AG04449 (cell line): ENCODE measurements at regions of chr5 and their contacts with region 1.

Region 1: GRCh38 chr5:95781101-95781583 is 41.4 kb downstream of the GLRX start:
- DNase-seq: no peak
- H3K4me3 ChIP-seq: no peak overlapping the region
- CTCF ChIP-seq: peak; percentile 86

Region 2: GRCh38 chr5:95406426-95407090 is 374.6 kb before region 1 on chr5:
- CTCF ChIA-PET with region 1: no interaction called
- POLR2A ChIA-PET with region 1: no interaction called
- DNase-seq: no peak
- H3K4me3 ChIP-seq: no peak overlapping the region
- CTCF ChIP-seq: no peak

Region 3: DNA sequence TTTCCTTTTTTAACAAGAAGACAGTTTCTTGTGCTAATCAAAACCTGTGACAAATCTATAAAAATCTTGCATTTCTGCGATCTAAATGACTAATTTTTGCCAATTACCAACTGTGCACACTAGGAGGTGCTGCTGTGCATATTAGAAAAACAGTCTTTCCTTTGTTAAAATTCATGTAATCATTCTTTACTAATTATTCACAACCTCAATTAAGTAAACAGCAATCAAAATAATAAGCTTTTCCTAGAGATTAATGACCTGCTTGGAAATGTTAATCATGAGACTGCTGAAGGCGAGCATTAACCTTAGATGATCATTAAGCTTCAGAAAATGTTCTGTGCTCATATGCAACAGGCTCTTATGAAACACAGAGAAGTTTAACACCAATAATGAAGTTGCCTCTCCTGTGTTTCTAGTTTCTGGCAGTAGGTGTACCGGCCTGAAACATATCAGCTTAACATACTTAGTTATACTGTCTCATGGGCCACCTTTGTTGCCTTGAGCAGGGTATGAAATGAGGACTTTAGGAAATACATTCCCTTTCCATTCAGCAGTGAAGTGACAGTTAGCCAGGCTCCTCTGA is 116.8 kb before region 1 on chr5:
- CTCF ChIA-PET with region 1: interaction called, 41 read pairs
- POLR2A ChIA-PET with region 1: no interaction called
- DNase-seq: no peak
- H3K4me3 ChIP-seq: no peak overlapping the region
- CTCF ChIP-seq: peak; percentile 59

Region 4: GRCh38 chr5:95760273-95761191 is 20.6 kb before region 1 on chr5:
- CTCF ChIA-PET with region 1: interaction called, 11 read pairs
- POLR2A ChIA-PET with region 1: interaction called, 3 read pairs
- DNase-seq: peak; percentile 99
- H3K4me3 ChIP-seq: peak overlapping the region; percentile 30
- CTCF ChIP-seq: no peak

Region 5: GRCh38 chr5:95808686-95809413 is 27.7 kb after region 1 on chr5:
- CTCF ChIA-PET with region 1: interaction called, 25 read pairs
- POLR2A ChIA-PET with region 1: no interaction called
- DNase-seq: peak; percentile 46
- H3K4me3 ChIP-seq: no peak overlapping the region
- CTCF ChIP-seq: no peak

Region 6: DNA sequence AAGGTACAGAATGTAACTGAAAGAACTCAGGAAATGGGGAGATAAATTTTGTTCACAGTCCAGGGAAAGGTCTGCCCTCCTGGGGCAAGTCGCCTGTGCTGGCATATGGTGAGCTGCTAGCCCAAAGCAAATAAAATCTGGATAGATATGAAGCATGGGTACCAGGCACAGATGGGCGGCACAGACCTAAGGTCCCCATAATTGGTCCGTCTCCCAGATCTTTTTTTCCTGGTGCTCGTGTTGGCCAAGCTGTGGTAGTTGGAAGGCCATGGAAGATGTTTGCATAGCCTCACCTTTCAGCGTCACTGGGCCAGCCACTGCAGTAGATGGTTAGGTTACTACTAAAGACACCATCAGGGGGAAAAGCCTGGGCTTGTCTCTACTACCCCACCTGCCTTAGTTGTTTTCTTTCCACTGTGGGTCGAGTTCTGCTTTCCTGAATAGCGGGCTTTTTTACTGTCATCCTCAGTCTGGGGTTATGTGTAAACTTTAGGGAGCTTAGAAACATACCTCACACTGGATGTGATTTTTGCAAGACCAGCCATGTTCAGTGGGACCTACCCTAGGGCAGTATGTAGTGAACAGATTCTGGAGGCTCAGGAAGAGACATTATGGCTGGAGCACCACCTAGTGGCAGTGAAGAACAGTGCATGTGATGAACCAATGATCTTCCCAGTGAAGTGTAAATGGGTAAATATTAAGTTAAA is 65.6 kb after region 1 on chr5:
- CTCF ChIA-PET with region 1: interaction called, 318 read pairs
- POLR2A ChIA-PET with region 1: no interaction called
- DNase-seq: no peak
- H3K4me3 ChIP-seq: no peak overlapping the region
- CTCF ChIP-seq: peak; percentile 82

Region 7: DNA sequence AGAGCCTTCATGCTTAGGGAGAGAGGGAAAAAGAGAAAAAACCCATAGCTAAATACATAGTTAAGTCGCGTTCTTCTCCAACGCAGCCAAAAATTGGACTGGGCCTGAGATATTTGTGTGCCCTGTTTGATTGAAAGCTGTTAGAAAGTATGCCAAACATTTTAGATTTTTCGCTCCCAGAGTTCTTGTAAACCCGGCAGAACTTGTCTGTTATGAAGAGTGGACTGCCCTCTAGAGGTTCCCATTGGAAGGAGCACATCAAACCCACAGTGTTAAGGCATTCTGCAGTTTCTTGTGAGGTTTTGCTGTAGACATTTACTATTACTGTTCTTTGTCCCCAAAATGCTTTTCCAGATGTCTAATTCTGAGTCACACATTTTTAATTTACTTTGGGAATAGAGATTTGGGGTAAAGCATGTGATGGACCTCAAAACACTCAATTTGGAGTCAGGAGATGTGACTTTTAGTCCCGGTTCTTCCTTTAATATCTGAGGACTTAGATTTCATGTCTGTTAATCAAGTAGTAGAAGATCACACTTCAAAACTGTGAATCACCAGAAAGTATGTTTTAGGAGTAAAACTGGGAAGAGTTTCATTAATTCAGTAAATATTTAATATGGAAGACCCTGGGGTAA is 555.3 kb after region 1 on chr5:
- CTCF ChIA-PET with region 1: interaction called, 14 read pairs
- POLR2A ChIA-PET with region 1: no interaction called
- DNase-seq: peak; percentile 72
- H3K4me3 ChIP-seq: no peak overlapping the region
- CTCF ChIP-seq: peak; percentile 80